ENCODE measurements at regions of chr12 and their contacts with region 1.

Region 1: GRCh38 chr12:71685914-71686665 is at the start of gene TMEM19:
- H3K4me3 ChIP-seq: peak within 1 kb of the TSS; percentile 97
- H3K27ac ChIP-seq: peak within 1 kb of the TSS; percentile 83
- H3K4me1 ChIP-seq: no peaks in the 10 kb centered on the region
- CTCF ChIP-seq: no peak; the same call in none of the 2 replicates

Region 2: DNA sequence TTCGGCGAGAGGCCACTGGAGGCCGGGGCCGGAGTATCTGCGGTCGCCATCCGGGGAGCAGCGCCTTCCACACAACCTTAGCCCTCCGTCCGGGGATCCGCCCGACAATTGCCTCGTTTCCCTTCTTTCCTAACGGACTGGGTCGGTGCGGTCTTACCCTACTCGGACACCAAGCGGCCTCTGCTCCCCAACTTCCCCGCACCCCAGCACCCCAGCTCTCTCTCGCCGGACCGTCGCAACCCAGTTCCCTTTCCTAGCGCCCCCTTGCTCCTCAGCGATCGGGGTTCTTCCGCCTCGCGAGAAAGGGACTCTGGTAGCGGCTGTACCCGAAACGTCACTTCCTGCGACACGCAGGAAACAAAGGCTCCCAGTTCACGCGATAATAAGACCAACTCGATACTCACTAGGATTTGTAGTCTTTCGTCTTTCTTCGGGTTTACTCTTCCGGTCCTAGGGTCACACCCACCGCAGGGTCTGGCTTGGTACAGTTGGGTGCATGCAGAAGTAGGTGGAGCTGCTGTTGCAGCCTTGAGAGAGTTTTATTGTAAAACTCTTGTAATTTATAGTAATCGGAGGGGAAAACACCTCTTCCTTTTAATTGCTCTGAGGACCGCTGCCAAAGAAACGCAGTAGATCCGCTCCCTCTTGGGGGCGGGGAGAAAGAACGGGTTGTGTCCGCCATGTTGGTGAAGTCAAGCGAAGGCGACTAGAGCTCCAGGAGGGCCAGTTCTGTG is 22.4 kb before region 1 on chr12 and contains the start of gene ZFC3H1:
- CTCF ChIA-PET with region 1: no interaction called
- POLR2A ChIA-PET with region 1: interaction called, 90 read pairs
- H3K4me3 ChIP-seq: peak within 1 kb of the TSS; percentile 71
- H3K27ac ChIP-seq: peak within 1 kb of the TSS; percentile 83
- H3K4me1 ChIP-seq: peaks cover 2% of the 10 kb centered on the region; the same call in 1 of the 2 replicates
- CTCF ChIP-seq: peak; percentile 94

Region 3: GRCh38 chr12:71746983-71747611 is 61.0 kb after region 1 on chr12:
- CTCF ChIA-PET with region 1: interaction called, 17 read pairs
- POLR2A ChIA-PET with region 1: interaction called, 10 read pairs
- H3K4me3 ChIP-seq: no peak overlapping the region
- H3K27ac ChIP-seq: no peak overlapping the region
- H3K4me1 ChIP-seq: no peaks in the 10 kb centered on the region
- CTCF ChIP-seq: peak; percentile 25; the same call in 1 of the 2 replicates

Measured in HEK293 (cell line).